MCF 10A (cell line): ENCODE measurements at regions of chr5 and their contacts with region 1.

Region 1: GRCh38 chr5:129904102-129904666 is at the start of gene CHSY3:
- DNase-seq: peak; percentile 93
- H3K4me3 Mint-ChIP-seq: peak within 1 kb of the TSS; percentile 84
- H3K27ac Mint-ChIP-seq: no peak within 1 kb of the TSS
- H3K4me1 Mint-ChIP-seq: peaks cover 24% of the 10 kb centered on the region
- H3K27me3 Mint-ChIP-seq: peaks cover 27% of the 10 kb centered on the region
- CTCF ChIP-seq: no peak
- total RNA-seq, gene CHSY3: 0.82 and 1.2 TPM in 2 replicates

Region 2: GRCh38 chr5:130077007-130077406 is 172.8 kb after region 1 on chr5:
- CTCF ChIA-PET with region 1: interaction called, 6 read pairs
- POLR2A ChIA-PET with region 1: interaction called, 3 read pairs
- intact Hi-C with region 1: loop called (anchors 1 kb)
- DNase-seq: peak; percentile 10
- H3K4me3 Mint-ChIP-seq: no peak overlapping the region
- H3K27ac Mint-ChIP-seq: no peak overlapping the region
- H3K4me1 Mint-ChIP-seq: no peaks in the 10 kb centered on the region
- H3K27me3 Mint-ChIP-seq: no peaks in the 10 kb centered on the region
- CTCF ChIP-seq: peak; percentile 16

Region 3: GRCh38 chr5:130251931-130252330 is 347.7 kb after region 1 on chr5:
- CTCF ChIA-PET with region 1: no interaction called
- POLR2A ChIA-PET with region 1: no interaction called
- intact Hi-C with region 1: no loop called
- DNase-seq: no peak
- H3K4me3 Mint-ChIP-seq: no peak overlapping the region
- H3K27ac Mint-ChIP-seq: no peak overlapping the region
- H3K4me1 Mint-ChIP-seq: no peaks in the 10 kb centered on the region
- H3K27me3 Mint-ChIP-seq: no peaks in the 10 kb centered on the region
- CTCF ChIP-seq: no peak

Region 4: GRCh38 chr5:130541617-130542221 is 637.5 kb after region 1 on chr5:
- CTCF ChIA-PET with region 1: no interaction called
- POLR2A ChIA-PET with region 1: no interaction called
- intact Hi-C with region 1: loop called (anchors 10 kb)
- DNase-seq: peak; percentile 89
- H3K4me3 Mint-ChIP-seq: peak overlapping the region; percentile 4
- H3K27ac Mint-ChIP-seq: peak overlapping the region; percentile 25
- H3K4me1 Mint-ChIP-seq: peaks cover 31% of the 10 kb centered on the region
- H3K27me3 Mint-ChIP-seq: no peaks in the 10 kb centered on the region
- CTCF ChIP-seq: no peak

Region 5: DNA sequence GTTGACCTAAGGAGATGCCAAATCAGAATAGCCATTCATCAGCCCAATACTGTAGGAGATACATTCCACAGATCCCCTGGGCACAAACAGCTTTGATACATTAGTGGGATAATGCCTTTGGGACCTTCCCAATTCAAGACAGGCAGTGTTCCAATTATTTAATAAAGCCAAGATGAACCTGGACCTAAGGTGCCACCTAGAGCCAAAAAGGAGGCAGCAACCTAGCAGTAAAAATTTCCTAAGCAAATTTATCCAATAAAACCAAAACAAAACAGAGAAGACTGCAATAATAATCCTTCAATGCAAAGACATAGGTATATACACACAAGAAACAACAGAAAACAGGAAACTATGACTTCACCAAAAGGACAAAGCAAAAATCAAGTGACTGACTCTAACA is 1007.9 kb after region 1 on chr5:
- CTCF ChIA-PET with region 1: no interaction called
- POLR2A ChIA-PET with region 1: no interaction called
- intact Hi-C with region 1: loop called (anchors 1 kb)
- DNase-seq: peak; percentile 54
- H3K4me3 Mint-ChIP-seq: no peak overlapping the region
- H3K27ac Mint-ChIP-seq: no peak overlapping the region
- H3K4me1 Mint-ChIP-seq: no peaks in the 10 kb centered on the region
- H3K27me3 Mint-ChIP-seq: no peaks in the 10 kb centered on the region
- CTCF ChIP-seq: peak; percentile 41

Region 6: GRCh38 chr5:131417240-131417869 is 1513.2 kb after region 1 on chr5:
- CTCF ChIA-PET with region 1: no interaction called
- POLR2A ChIA-PET with region 1: no interaction called
- intact Hi-C with region 1: loop called (anchors 1 kb)
- DNase-seq: peak; percentile 85
- H3K4me3 Mint-ChIP-seq: no peak overlapping the region
- H3K27ac Mint-ChIP-seq: no peak overlapping the region
- H3K4me1 Mint-ChIP-seq: peaks cover 5% of the 10 kb centered on the region
- H3K27me3 Mint-ChIP-seq: no peaks in the 10 kb centered on the region
- CTCF ChIP-seq: peak; percentile 89